ENCODE measurements at regions of chr20 and their contacts with region 1.

Region 1: DNA sequence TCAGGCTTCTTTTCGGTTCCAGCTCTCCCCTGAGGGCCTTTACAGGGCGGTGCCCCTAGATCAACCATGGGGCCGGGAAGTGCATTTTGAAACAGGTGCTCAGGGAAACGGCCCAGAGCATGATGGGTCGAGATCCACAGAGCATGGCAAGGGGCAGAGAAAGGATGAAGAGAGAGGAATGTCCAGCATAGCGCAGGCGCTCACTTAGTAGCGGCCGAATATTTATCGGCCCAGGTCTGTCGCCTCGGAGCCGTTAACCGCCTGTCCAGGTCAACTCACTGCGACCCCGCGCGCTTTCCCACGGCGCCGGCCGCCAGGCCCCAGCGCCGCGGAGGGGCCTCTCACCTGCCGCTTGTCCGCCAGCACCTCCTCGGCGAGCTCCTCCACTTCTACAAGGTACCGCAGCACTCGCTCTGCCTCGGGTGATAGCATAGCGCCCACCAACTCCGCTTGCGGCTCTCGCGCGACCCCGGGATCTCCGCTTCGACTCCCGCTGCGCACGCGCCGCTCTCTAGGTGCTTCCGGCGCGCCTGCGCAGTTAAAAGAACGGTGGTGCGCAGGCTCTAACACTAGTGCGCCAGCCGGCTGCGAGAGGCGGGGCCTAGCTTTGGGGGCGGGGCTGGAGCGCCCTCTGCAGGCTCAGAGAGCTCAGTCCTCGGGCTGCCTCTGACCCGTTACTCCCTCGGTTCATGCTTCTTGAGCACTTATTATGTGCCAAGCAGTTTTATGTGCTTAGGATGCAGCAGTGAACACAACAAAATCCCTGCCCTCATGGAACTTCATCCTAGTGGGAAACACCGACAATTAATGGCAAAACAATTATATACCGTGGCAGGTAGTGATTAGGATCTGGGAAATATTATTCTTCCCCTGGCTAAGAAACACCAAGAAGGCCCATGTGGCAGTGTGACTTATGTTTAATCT is at the start of gene PDRG1:
- DNase-seq: peak; percentile 97
- ATAC-seq: peak; percentile 99
- H3K4me3 ChIP-seq: peak within 1 kb of the TSS; percentile 98
- H3K27ac ChIP-seq: no peak within 1 kb of the TSS
- H3K4me1 ChIP-seq: peaks cover 9% of the 10 kb centered on the region
- H3K27me3 ChIP-seq: peaks cover 13% of the 10 kb centered on the region
- CTCF ChIP-seq: peak; percentile 93
- total RNA-seq, gene PDRG1: 11.7 and 12.3 TPM in 2 replicates

Region 2: GRCh38 chr20:31849455-31849925 is 102.3 kb before region 1 on chr20:
- CTCF ChIA-PET with region 1: interaction called, 23 read pairs
- POLR2A ChIA-PET with region 1: no interaction called
- intact Hi-C with region 1: loop called (anchors 1 kb)
- DNase-seq: peak; percentile 4
- ATAC-seq: peak; percentile 9; the same call in 1 of the 2 replicates
- H3K4me3 ChIP-seq: no peak overlapping the region
- H3K27ac ChIP-seq: no peak overlapping the region
- H3K4me1 ChIP-seq: 0 out of 2 replicates have a peak, but pooled peaks cover 3% of the 10 kb centered on the region
- H3K27me3 ChIP-seq: peaks cover 13% of the 10 kb centered on the region
- CTCF ChIP-seq: no peak

Region 3: GRCh38 chr20:31879143-31879987 is 72.4 kb before region 1 on chr20:
- CTCF ChIA-PET with region 1: no interaction called
- POLR2A ChIA-PET with region 1: no interaction called
- intact Hi-C with region 1: loop called (anchors 2 kb)
- DNase-seq: peak; percentile 94
- ATAC-seq: peak; percentile 99
- H3K4me3 ChIP-seq: peak overlapping the region; percentile 79
- H3K27ac ChIP-seq: no peak overlapping the region
- H3K4me1 ChIP-seq: 0 out of 2 replicates have a peak, but pooled peaks cover 9% of the 10 kb centered on the region
- H3K27me3 ChIP-seq: no peaks in the 10 kb centered on the region
- CTCF ChIP-seq: no peak

Region 4: DNA sequence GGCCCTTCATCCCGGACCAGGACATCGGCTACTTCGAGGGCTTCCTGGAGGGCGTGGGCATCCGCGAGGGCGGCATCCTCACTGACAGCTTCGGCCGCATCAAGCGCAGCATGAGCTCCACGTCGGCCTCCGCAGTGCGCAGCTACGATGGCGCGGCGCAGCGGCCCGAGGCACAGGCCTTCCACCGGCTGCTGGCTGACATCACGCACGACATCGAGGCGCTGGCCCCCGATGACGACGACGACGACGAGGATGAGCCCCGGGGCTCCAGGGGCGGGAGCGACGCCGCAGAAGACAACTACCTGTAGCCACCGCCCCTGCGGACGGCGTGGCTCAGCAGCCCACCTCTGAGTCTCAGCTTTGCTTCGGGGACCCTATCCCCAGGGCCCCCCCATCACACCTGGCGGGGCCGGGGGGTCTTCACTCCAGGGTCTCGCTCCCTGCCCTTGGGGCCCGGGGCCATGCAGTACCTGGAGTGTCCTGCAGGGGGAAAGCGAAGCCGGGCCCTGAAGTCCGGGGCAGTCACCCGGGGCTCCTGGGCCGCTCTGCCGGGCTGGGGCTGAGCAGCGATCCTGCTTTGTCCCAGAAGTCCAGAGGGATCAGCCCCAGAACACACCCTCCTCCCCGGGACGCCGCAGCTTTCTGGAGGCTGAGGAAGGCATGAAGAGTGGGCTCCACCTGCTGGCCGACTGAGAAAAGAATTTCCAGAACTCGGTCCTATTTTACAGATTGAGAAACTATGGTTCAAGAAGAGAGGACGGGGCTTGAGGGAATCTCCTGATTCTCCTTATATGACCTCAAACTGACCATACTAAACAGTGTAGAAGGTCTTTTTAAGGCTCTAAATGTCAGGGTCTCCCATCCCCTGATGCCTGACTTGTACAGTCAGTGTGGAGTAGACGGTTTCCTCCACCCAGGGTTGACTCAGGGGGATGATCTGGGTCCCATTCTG is 79.5 kb after region 1 on chr20:
- CTCF ChIA-PET with region 1: no interaction called
- POLR2A ChIA-PET with region 1: no interaction called
- intact Hi-C with region 1: loop called (anchors 5 kb)
- DNase-seq: peak; percentile 84
- ATAC-seq: peak; percentile 99
- H3K4me3 ChIP-seq: no peak overlapping the region; the same call in 1 of the 2 replicates
- H3K27ac ChIP-seq: no peak overlapping the region
- H3K4me1 ChIP-seq: no peaks in the 10 kb centered on the region
- H3K27me3 ChIP-seq: peaks cover 47% of the 10 kb centered on the region
- CTCF ChIP-seq: peak; percentile 94

Measured in PC-3 (cell line).